ENCODE measurements at regions of chr7 and their contacts with region 1.

Region 1: GRCh38 chr7:155598810-155599210 is 45.7 kb upstream of the RBM33 start:
- DNase-seq: peak; percentile 87
- ATAC-seq: peak; percentile 88
- H3K4me3 Mint-ChIP-seq: no peak overlapping the region
- H3K27ac Mint-ChIP-seq: no peak overlapping the region
- H3K4me1 Mint-ChIP-seq: peaks cover 7% of the 10 kb centered on the region
- H3K27me3 Mint-ChIP-seq: peaks cover 58% of the 10 kb centered on the region

Region 2: GRCh38 chr7:155611808-155612447 is 13.1 kb after region 1 on chr7:
- CTCF ChIA-PET with region 1: interaction called, 12 read pairs
- DNase-seq: no peak
- ATAC-seq: no peak
- H3K4me3 Mint-ChIP-seq: no peak overlapping the region
- H3K27ac Mint-ChIP-seq: no peak overlapping the region
- H3K4me1 Mint-ChIP-seq: no peaks in the 10 kb centered on the region
- H3K27me3 Mint-ChIP-seq: peaks cover 7% of the 10 kb centered on the region

Region 3: GRCh38 chr7:155702616-155703015 is 103.8 kb after region 1 on chr7:
- CTCF ChIA-PET with region 1: interaction called, 15 read pairs
- DNase-seq: no peak
- ATAC-seq: no peak
- H3K4me3 Mint-ChIP-seq: no peak overlapping the region
- H3K27ac Mint-ChIP-seq: peak overlapping the region; percentile 54
- H3K4me1 Mint-ChIP-seq: peaks cover 16% of the 10 kb centered on the region
- H3K27me3 Mint-ChIP-seq: no peaks in the 10 kb centered on the region

Region 4: DNA sequence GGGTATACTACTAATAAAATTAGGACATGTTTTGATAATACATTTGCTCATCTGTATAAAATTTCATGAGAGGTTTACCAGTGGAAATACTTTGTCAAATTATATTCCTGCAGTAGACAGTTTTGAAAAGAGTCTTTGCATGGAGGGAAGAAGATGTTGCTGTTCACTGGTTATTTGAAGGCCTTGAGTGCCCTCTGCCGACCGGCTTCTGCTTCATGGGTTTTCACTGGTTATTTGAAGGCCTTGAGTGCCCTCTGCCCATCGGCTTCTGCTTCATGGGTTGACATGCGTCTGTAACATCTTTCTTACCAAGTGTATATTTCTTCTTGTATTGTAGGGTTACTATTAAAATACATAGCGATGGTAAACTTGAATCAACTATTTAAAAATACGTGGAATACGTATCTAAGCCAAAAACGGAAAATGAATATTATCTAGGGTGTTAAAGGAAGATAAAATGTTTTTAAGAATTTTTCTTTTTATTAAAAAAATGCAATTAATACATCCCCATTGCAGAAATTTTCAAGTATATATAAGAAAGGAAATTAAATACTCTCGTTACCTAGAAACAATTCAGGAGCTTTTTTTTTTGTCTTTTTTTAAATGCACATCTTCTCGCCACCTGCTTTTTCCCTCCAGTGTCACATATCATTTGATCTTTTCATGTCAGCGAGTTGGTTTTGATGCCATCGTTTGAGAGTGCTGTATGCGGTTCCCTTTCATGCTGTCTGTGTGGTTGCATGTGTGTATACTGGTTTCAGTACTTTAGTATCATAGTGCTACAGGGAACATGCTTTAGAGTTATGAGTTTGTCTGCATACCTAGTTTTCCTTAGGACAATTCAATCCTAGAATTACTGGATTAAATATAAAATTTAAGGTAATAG is 140.1 kb after region 1 on chr7:
- CTCF ChIA-PET with region 1: interaction called, 32 read pairs
- DNase-seq: peak; percentile 83
- ATAC-seq: peak; percentile 34
- H3K4me3 Mint-ChIP-seq: peak overlapping the region; percentile 40
- H3K27ac Mint-ChIP-seq: peak overlapping the region; percentile 50
- H3K4me1 Mint-ChIP-seq: peaks cover 49% of the 10 kb centered on the region
- H3K27me3 Mint-ChIP-seq: no peaks in the 10 kb centered on the region

Region 5: DNA sequence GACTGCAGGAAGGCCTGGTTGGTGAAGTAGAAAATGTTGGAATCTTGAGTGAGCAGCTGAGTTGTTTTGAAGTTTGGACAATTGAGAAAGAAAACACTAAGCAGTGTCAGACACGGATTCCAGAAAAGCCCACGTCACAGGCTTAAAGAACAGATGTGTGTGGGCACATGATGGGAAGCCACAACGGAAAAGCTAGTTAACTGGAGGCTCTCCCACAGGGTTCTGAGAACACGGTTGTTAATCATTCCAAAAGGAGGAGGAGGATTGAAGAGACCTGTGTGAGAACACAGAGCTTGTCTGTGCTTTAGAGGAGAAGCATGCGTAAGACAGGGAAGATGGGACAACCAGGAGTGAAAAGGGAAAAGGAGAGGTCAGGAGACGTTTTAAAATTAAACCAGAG is 170.9 kb after region 1 on chr7:
- CTCF ChIA-PET with region 1: interaction called, 116 read pairs
- DNase-seq: no peak
- ATAC-seq: no peak
- H3K4me3 Mint-ChIP-seq: no peak overlapping the region
- H3K27ac Mint-ChIP-seq: no peak overlapping the region
- H3K4me1 Mint-ChIP-seq: peaks cover 21% of the 10 kb centered on the region
- H3K27me3 Mint-ChIP-seq: no peaks in the 10 kb centered on the region

Measured in activated CD8-positive, alpha-beta memory T cell treated with anti-CD3 and anti-CD28 coated beads, Interleukin-2, amount 10 ng/mL, durations not matched to agents 7 days and 5 days (primary cell).